ENCODE measurements at regions of chr11 and their contacts with region 1.

Region 1: GRCh38 chr11:65471410-65471762 is 27.5 kb upstream of the MALAT1 start:
- DNase-seq: peak in 1 of 2 experiments; percentile 66
- H3K4me3 ChIP-seq: no peak overlapping the region
- H3K27ac ChIP-seq: no peak overlapping the region
- H3K4me1 ChIP-seq: no peaks in the 10 kb centered on the region
- H3K27me3 ChIP-seq: no peaks in the 10 kb centered on the region; a peak in 1 of 7 replicates
- CTCF ChIP-seq: peak; percentile 45 to 69 (median 63); a peak in 3 of 4 replicates
- EP300 ChIP-seq: no peak
- POLR2A ChIP-seq: no peak
- RAD21 ChIP-seq: peak; percentile 63 to 70

Region 2: GRCh38 chr11:65288706-65289536 is 182.5 kb before region 1 on chr11:
- CTCF ChIA-PET with region 1: no interaction called
- POLR2A ChIA-PET with region 1: no interaction called
- DNase-seq: no peak
- H3K4me3 ChIP-seq: no peak overlapping the region
- H3K27ac ChIP-seq: no peak overlapping the region
- H3K4me1 ChIP-seq: no peaks in the 10 kb centered on the region
- H3K27me3 ChIP-seq: no peaks in the 10 kb centered on the region
- CTCF ChIP-seq: no peak
- EP300 ChIP-seq: no peak
- POLR2A ChIP-seq: no peak
- RAD21 ChIP-seq: no peak

Region 3: DNA sequence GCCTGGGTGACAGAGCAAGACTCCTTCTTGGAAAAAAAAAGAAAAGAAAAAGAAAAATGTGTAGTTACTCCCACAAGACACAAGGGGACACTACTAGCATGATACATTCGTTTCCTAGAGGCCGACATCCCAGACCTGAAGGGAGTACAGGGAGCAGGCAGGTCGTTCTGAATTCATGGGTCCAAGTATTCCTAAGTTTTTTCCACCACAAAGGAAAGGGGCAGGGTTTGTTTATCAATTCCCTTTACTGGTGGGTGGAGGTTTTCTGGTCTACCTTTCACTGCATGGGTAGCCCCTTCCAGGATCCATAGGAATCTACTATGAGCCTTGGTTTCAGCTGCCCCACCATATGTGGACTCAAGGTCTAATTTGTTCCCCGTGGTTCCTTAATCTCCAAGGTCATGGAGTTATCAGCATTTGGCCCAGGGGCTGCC is 105.0 kb before region 1 on chr11:
- CTCF ChIA-PET with region 1: interaction called, 18 read pairs
- POLR2A ChIA-PET with region 1: no interaction called
- DNase-seq: no peak
- H3K4me3 ChIP-seq: no peak overlapping the region
- H3K27ac ChIP-seq: no peak overlapping the region
- H3K4me1 ChIP-seq: peaks cover 0 to 4% (median 0%) of the 10 kb centered on the region in 4 experiments; a peak in 2 of 7 replicates
- H3K27me3 ChIP-seq: no peaks in the 10 kb centered on the region
- CTCF ChIP-seq: peak in 2 of 3 experiments; percentile 71 to 77; a peak in 3 of 4 replicates
- EP300 ChIP-seq: no peak
- POLR2A ChIP-seq: no peak
- RAD21 ChIP-seq: peak; percentile 87 to 92

Region 4: DNA sequence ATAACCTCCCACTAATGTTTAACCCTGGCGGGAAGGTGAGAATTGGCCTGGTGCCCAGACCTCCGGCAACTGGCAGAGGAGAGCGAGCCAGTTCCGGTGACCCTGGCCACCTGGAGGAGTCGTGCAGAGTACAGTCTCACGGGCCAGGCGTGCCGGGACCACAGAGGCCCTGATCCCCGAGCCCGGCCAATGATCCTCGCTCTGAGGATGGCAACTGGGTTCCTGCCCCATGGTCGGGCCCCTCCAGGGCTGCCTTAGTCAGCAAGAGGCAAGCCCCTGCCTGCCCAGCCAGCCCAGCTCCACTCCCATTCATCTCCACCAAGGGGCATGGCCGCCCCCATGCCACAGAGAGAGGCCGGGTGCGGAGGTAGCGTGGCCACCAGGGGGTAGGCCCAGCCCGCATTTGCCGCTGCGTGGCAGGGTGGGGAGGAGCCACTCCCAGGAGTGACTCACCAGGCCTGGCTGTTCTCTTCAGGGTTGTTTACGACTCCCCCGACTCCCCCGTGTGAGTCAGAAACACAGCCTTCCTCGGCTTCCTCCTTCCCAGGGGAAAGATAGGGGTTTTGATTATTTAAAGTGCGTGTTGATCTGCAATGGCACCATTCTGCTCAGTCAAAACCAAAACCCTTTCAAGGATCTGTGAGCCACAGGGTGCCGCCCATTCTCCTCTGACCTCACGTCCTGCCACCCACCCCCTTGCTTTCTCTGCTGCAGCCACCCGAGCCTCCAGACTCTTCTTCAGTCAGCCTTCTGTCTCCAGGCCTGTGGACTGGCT is 89.2 kb before region 1 on chr11 and contains the start of gene SLC25A45:
- CTCF ChIA-PET with region 1: interaction called, 19 read pairs
- POLR2A ChIA-PET with region 1: interaction called, 6 read pairs
- DNase-seq: peak in 1 of 2 experiments; percentile 80
- H3K4me3 ChIP-seq: peak within 1 kb of the TSS in 1 of 4 experiments; percentile 8; a peak in 2 of 8 replicates
- H3K27ac ChIP-seq: no peak within 1 kb of the TSS; the same call in 1 of the 2 replicates
- H3K4me1 ChIP-seq: peaks cover 0 to 12% (median 11%) of the 10 kb centered on the region in 4 experiments; a peak in 5 of 7 replicates
- H3K27me3 ChIP-seq: 0 out of 7 replicates have a peak, but pooled peaks cover 0 to 2% (median 0%) of the 10 kb centered on the region in 4 experiments
- CTCF ChIP-seq: peak; percentile 23 to 50 (median 46)
- EP300 ChIP-seq: no peak
- POLR2A ChIP-seq: 0 out of 3 replicates have a peak, but pooled peaks of 1 of the 2 experiments have one; percentile 19
- RAD21 ChIP-seq: peak; percentile 49 to 55
- total RNA-seq, gene SLC25A45: 0.54 and 0.61 TPM in 2 replicates

Region 5: DNA sequence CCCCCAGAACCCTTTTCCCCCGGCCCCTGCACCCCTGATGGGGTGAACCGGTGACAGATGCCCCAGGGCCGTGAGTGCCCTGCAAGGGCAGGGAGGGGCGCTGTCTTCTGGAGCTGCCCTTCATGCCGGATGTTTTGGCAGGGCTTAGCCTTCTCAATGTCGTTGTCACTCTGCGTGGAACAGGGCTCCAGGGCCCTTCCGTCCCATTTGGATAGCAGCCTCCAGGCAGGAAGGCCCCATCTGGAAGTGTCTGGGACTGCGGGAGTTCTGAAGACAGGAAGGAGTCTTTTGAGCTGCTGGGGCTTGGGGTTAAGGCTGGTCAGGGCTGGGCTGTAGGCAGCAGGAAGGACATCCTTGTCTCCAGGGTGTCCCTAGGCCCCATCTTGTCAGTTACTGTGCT is 80.4 kb before region 1 on chr11:
- CTCF ChIA-PET with region 1: interaction called, 12 read pairs
- POLR2A ChIA-PET with region 1: interaction called, 6 read pairs
- DNase-seq: no peak
- H3K4me3 ChIP-seq: no peak overlapping the region
- H3K27ac ChIP-seq: no peak overlapping the region
- H3K4me1 ChIP-seq: peaks cover 0 to 14% (median 5%) of the 10 kb centered on the region in 4 experiments; a peak in 5 of 7 replicates
- H3K27me3 ChIP-seq: 0 out of 7 replicates have a peak, but pooled peaks cover 0 to 2% (median 0%) of the 10 kb centered on the region in 4 experiments
- CTCF ChIP-seq: peak in 2 of 3 experiments; percentile 24 to 29; a peak in 2 of 4 replicates
- EP300 ChIP-seq: no peak
- POLR2A ChIP-seq: no peak
- RAD21 ChIP-seq: no peak

Region 6: GRCh38 chr11:65454696-65455456 is 16.5 kb before region 1 on chr11:
- CTCF ChIA-PET with region 1: interaction called, 39 read pairs
- POLR2A ChIA-PET with region 1: no interaction called
- DNase-seq: peak; percentile 69 to 92
- H3K4me3 ChIP-seq: peak overlapping the region; percentile 46 to 67 (median 54); a peak in 7 of 8 replicates
- H3K27ac ChIP-seq: no peak overlapping the region
- H3K4me1 ChIP-seq: peaks cover 2 to 11% (median 6%) of the 10 kb centered on the region in 4 experiments; a peak in 6 of 7 replicates
- H3K27me3 ChIP-seq: peaks cover 20 to 59% (median 53%) of the 10 kb centered on the region in 4 experiments
- CTCF ChIP-seq: no peak
- EP300 ChIP-seq: no peak
- POLR2A ChIP-seq: peak in 1 of 2 experiments; percentile 29; a peak in 1 of 3 replicates
- RAD21 ChIP-seq: no peak

Measured in H1 (cell line).